ENCODE measurements at regions of chr11 and their contacts with region 1.

Region 1: GRCh38 chr11:118907051-118908042 is 18.4 kb downstream of the BCL9L start:
- DNase-seq: peak; percentile 56 to 92 (median 82)
- ATAC-seq: peak; percentile 49 to 56 (median 53)
- H3K4me3 ChIP-seq: no peak overlapping the region
- H3K4me3 Mint-ChIP-seq: peak overlapping the region in 1 of 3 donors; percentile 74
- H3K27ac ChIP-seq: peak overlapping the region; percentile 50
- H3K27ac Mint-ChIP-seq: peak overlapping the region; percentile 87 to 91
- H3K4me1 ChIP-seq: peaks cover 20 to 67% of the 10 kb centered on the region in 2 experiments
- H3K4me1 Mint-ChIP-seq: peaks cover 39 to 53% (median 47%) of the 10 kb centered on the region in 3 donors
- H3K27me3 ChIP-seq: no peaks in the 10 kb centered on the region
- H3K27me3 Mint-ChIP-seq: no peaks in the 10 kb centered on the region

Region 2: GRCh38 chr11:118046051-118046963 is 861.0 kb before region 1 on chr11:
- CTCF ChIA-PET with region 1: no interaction called
- POLR2A ChIA-PET with region 1: interaction called in 1 of 2 experiments, 10 read pairs
- DNase-seq: peak in 33 of 35 experiments; percentile 24 to 76 (median 52)
- ATAC-seq: peak; percentile 70 to 92 (median 82)
- H3K4me3 ChIP-seq: no peak overlapping the region
- H3K4me3 Mint-ChIP-seq: peak overlapping the region in 2 of 3 donors; percentile 23 to 63
- H3K27ac ChIP-seq: peak overlapping the region; percentile 89
- H3K27ac Mint-ChIP-seq: peak overlapping the region; percentile 87 to 92
- H3K4me1 ChIP-seq: peaks cover 49 to 75% of the 10 kb centered on the region in 2 experiments
- H3K4me1 Mint-ChIP-seq: peaks cover 90 to 94% (median 93%) of the 10 kb centered on the region in 3 donors
- H3K27me3 ChIP-seq: no peaks in the 10 kb centered on the region
- H3K27me3 Mint-ChIP-seq: no peaks in the 10 kb centered on the region

Region 3: GRCh38 chr11:118799372-118799771 is 108.0 kb before region 1 on chr11:
- CTCF ChIA-PET with region 1: interaction called in 1 of 2 experiments, 3 read pairs
- POLR2A ChIA-PET with region 1: interaction called in 1 of 2 experiments, 11 read pairs
- DNase-seq: no peak
- ATAC-seq: no peak
- H3K4me3 ChIP-seq: no peak overlapping the region
- H3K4me3 Mint-ChIP-seq: no peak overlapping the region
- H3K27ac ChIP-seq: no peak overlapping the region
- H3K27ac Mint-ChIP-seq: no peak overlapping the region
- H3K4me1 ChIP-seq: no peaks in the 10 kb centered on the region
- H3K4me1 Mint-ChIP-seq: peaks cover 0 to 6% (median 4%) of the 10 kb centered on the region in 3 donors
- H3K27me3 ChIP-seq: no peaks in the 10 kb centered on the region
- H3K27me3 Mint-ChIP-seq: no peaks in the 10 kb centered on the region

Region 4: DNA sequence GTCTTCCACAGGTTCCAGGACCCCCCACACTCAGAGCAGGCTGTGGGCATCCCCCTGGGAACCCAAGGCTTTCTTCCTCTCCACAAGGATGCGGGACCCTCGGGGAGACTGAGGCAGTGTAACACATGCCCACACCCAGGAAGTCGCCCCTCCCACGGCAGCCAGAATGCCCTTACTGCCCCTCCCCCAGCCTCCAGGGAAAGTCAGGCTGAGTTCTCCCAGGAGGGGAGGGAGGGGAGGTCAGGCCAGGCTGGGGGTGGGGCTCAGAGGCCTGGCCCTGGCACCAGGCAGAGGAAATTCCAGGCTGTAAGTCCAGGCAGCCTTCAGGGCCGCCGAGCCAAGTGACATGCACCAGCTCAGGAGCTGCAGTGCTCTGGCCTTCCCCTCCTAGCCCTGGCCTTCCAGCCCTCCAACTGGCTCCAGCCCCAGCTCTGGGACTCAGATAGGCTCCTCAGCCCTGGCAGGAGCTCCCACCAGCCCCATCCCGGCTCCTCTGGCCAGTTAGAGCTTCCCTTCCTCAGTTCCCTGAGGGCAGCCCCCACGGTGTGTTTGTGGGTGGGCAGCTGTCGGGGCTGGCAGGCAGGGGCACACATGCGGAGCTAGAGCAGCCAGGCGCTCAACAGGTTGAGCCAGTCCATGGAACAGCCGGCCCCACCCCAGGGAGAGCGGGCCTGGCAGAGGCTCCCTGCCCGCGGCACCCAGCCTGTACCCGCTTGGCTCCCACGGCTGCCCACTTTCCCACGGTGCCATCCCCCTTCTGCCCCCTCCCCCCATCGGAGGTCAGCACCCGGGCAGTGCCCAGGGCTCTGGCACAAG is 14.8 kb after region 1 on chr11:
- CTCF ChIA-PET with region 1: interaction called, 6 to 30 read pairs
- POLR2A ChIA-PET with region 1: interaction called, 4 to 18 read pairs
- DNase-seq: peak in 2 of 35 experiments; percentile 9 to 25
- ATAC-seq: no peak
- H3K4me3 ChIP-seq: peak overlapping the region; percentile 99
- H3K4me3 Mint-ChIP-seq: peak overlapping the region; percentile 93 to 96 (median 96)
- H3K27ac ChIP-seq: peak overlapping the region; percentile 95
- H3K27ac Mint-ChIP-seq: peak overlapping the region; percentile 96
- H3K4me1 ChIP-seq: peaks cover 35 to 80% of the 10 kb centered on the region in 2 experiments
- H3K4me1 Mint-ChIP-seq: peaks cover 51 to 67% (median 63%) of the 10 kb centered on the region in 3 donors
- H3K27me3 ChIP-seq: no peaks in the 10 kb centered on the region
- H3K27me3 Mint-ChIP-seq: no peaks in the 10 kb centered on the region

Measured in T-cell (primary cell).